Common myeloid progenitor, CD34-positive (primary cell): ENCODE measurements at regions of chr2 and their contacts with region 1.

Region 1: DNA sequence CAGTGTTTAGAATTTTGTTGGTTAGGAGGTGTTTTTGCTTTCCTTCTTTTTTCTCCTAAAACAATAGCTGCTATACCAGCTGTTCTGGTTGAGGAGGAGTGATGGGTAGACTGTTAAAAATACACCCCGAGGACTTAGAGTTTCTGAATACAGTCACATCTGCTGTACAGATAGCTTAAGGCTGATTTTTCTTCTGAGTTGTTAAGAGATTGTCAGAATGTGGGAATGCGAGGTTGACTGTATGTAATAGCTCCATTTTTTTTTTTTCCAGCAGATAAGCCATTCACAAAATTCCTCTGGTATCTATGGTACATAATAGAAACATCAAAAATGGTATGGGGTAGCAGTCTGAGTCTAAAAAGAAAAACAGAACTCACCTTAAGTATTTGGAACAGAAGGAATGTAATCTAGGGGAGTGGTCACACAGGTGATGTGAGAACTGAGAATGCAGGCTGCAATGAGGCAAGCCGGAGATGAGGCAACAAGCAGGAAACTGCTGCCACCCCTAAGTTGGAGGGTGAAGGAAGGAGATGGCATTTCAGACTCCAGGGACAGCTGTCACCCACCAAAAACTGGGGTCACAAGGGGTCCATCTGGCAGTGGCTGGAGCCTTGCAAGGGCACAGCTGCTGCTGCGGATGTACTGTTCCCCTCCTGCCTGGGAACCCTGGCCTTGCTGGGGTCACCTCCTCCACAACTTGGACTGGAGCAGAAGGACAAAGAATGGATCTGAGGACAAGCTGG is 2.4 kb downstream of the DGKD start:
- DNase-seq: no peak
- H3K4me3 ChIP-seq: peak overlapping the region in 1 of 7 experiments; percentile 4
- H3K27ac ChIP-seq: no peak overlapping the region
- H3K4me1 ChIP-seq: peaks cover 22 to 53% (median 33%) of the 10 kb centered on the region in 4 experiments
- H3K27me3 ChIP-seq: no peaks in the 10 kb centered on the region

Region 2: GRCh38 chr2:233273120-233273519 is 83.6 kb before region 1 on chr2:
- CTCF ChIA-PET with region 1: no interaction called
- POLR2A ChIA-PET with region 1: no interaction called
- DNase-seq: no peak
- H3K4me3 ChIP-seq: no peak overlapping the region
- H3K27ac ChIP-seq: no peak overlapping the region
- H3K4me1 ChIP-seq: peaks cover 0 to 11% (median 0%) of the 10 kb centered on the region in 4 experiments
- H3K27me3 ChIP-seq: no peaks in the 10 kb centered on the region

Region 3: GRCh38 chr2:233297076-233297475 is 59.7 kb before region 1 on chr2:
- CTCF ChIA-PET with region 1: no interaction called
- POLR2A ChIA-PET with region 1: no interaction called
- DNase-seq: no peak
- H3K4me3 ChIP-seq: no peak overlapping the region
- H3K27ac ChIP-seq: no peak overlapping the region
- H3K4me1 ChIP-seq: no peaks in the 10 kb centered on the region
- H3K27me3 ChIP-seq: no peaks in the 10 kb centered on the region

Region 4: DNA sequence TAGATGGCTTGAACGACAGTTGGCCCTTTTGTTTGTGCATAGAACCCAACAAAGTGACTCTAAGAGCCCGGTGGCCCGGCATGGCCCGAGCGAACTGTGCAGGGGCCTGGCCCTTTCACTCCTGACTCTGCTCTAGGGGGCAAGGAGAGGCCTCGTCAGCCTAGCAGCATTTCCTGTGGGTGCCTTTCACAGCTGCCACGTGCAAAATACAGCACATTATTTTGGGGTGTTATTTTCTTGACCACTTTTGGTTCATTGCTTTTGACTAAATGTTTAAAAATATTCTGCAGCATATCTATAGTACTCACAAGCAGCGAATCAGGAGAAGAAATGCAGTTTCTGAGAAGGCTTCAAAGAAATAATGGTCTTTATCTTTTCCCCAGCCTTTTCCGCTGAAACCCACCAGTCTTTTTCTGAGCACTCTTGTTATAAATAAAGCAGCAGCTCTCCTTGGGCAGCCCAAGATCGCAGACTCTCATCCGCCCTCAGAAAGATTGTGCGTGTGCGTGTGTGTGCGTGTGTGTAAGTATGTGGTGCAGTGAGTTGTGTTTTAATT is 28.8 kb after region 1 on chr2:
- CTCF ChIA-PET with region 1: interaction called, 12 read pairs
- POLR2A ChIA-PET with region 1: no interaction called
- DNase-seq: peak; percentile 89 to 95 (median 92)
- H3K4me3 ChIP-seq: peak overlapping the region in 4 of 7 experiments; percentile 4 to 52 (median 31)
- H3K27ac ChIP-seq: no peak overlapping the region
- H3K4me1 ChIP-seq: peaks cover 3 to 53% (median 43%) of the 10 kb centered on the region in 4 experiments
- H3K27me3 ChIP-seq: no peaks in the 10 kb centered on the region